Psoas muscle (tissue), 8 donors: ENCODE measurements at regions of chr10 and their contacts with region 1.

Region 1: DNA sequence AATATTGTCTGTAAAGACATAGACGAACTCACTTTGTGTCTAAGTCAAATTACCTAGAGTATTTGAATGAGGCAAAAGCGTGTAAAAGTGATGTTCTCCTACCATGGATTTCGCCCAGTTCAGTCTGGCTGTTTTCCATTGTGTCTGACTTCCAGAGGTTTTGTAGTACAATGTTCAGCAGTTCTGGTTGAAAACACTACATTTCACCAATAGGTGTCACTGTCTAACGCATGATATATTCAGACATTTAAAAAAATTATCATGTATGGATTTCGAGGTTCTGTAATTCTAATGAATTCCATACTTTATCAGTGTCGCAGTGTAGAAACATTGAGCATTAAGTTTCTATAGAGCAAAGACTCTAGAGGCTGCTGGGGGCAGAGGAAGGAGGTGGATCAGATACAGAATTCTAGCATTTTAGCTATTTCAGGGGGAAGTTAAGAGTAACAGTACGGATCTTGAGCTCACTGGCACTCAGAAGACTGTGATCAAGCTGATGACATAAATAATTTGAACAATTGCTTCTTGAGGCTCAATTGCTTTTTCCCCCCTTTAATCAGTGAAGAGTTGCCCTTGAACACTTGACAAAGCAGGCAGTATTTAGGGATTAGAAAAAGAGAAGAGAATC is 196.9 kb upstream of the RHOBTB1 start:
- DNase-seq: no peak
- ATAC-seq: peak; percentile 48 to 85 (median 66)
- H3K4me3 ChIP-seq: peak overlapping the region; percentile 21
- H3K27ac ChIP-seq: no peak overlapping the region
- H3K4me1 ChIP-seq: peaks cover 3% of the 10 kb centered on the region
- H3K27me3 ChIP-seq: no peaks in the 10 kb centered on the region
- CTCF ChIP-seq: peak; percentile 85

Region 2: GRCh38 chr10:61284222-61284890 is 143.5 kb after region 1 on chr10:
- intact Hi-C with region 1: loop called (anchors 1 to 5 kb)
- DNase-seq: no peak
- ATAC-seq: peak; percentile 66 to 86 (median 72)
- H3K4me3 ChIP-seq: peak overlapping the region; percentile 29
- H3K27ac ChIP-seq: peak overlapping the region; percentile 20
- H3K4me1 ChIP-seq: peaks cover 6% of the 10 kb centered on the region
- H3K27me3 ChIP-seq: no peaks in the 10 kb centered on the region
- CTCF ChIP-seq: peak; percentile 87

Region 3: GRCh38 chr10:61733358-61733940 is 592.6 kb after region 1 on chr10:
- intact Hi-C with region 1: loop called (anchors 10 kb)
- DNase-seq: no peak
- ATAC-seq: no peak
- H3K4me3 ChIP-seq: no peak overlapping the region
- H3K27ac ChIP-seq: no peak overlapping the region
- H3K4me1 ChIP-seq: no peaks in the 10 kb centered on the region
- H3K27me3 ChIP-seq: no peaks in the 10 kb centered on the region
- CTCF ChIP-seq: peak; percentile 59

Region 4: DNA sequence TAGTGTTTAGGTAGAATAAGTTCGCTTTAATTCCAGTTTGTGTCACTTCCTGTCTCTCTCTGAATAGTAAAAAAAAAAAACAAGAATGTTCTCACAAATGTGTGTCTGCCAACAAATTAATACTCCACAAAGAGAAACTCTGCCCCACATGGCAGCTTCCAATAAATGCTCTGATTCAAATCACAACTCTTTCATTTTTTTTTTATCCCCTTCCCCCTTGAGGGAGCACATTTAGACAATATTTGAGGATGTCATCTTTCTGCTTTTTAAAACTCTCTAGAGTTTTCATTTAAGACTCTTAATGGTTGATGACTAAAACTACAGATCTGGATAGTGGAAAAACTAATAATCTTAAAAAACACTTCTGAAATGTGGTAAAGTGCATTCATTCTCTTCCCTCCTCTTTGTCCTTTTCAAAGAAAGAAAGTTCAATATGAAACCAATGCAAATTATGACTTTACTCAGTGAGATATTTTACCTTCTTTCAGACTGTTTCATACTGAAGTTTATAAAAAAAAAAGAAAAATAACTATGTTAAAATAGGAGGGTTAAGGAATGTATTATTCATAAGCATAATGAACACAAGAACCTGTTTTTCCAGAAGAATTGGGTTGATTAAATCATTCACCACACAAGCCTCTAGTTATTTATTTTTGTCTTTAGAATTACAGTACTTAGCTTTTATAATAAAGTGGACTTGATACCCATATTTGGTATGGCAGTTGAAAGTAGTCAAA is 803.0 kb after region 1 on chr10:
- intact Hi-C with region 1: no loop called
- DNase-seq: no peak
- ATAC-seq: peak in 2 of 4 donors; percentile 30 to 62
- H3K4me3 ChIP-seq: peak overlapping the region; percentile 34
- H3K27ac ChIP-seq: peak overlapping the region; percentile 64
- H3K4me1 ChIP-seq: peaks cover 21% of the 10 kb centered on the region
- H3K27me3 ChIP-seq: no peaks in the 10 kb centered on the region
- CTCF ChIP-seq: peak; percentile 21